Natural killer cell (primary cell): ENCODE measurements at regions of chr18 and their contacts with region 1.

Region 1: DNA sequence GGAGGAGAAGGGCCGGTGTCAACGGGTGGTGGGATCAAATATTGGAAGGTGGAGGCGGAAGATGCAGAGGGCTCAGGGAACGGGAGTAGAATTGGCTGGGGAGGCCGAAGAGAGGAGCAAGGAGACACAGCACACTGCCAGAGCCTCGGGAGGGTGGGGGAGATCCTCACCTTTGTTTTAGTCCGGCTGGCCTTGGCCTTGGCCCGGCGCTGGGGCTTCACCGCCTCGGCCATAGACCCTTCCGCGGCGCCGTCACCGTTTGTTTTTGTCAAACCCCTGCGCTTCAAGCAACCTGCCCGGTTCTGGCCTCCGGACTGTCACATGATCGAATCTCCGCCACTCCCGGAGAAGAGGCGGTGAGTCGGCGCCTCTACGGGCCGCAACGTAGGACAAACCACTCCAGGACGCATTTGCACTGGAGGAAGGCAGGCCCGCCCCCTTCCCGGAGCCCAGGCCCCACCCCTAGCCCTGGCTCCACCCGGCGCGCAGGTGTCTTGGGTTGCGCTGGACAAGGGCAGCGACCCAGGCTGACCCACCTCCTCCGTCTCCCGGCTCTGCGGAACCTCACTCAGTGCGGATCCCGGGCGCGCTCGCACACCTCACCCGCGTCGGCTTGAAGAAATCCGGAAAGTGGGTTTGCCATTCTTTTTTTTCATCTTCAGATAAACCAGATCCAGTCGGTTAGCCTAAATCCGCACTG is at the start of gene EPG5:
- DNase-seq: peak; percentile 89 to 94
- ATAC-seq: peak; percentile 82 to 95 (median 84)
- H3K4me3 ChIP-seq: peak within 1 kb of the TSS; percentile 79
- H3K4me3 Mint-ChIP-seq: peak within 1 kb of the TSS; percentile 99
- H3K27ac ChIP-seq: peak within 1 kb of the TSS; percentile 72
- H3K27ac Mint-ChIP-seq: peak within 1 kb of the TSS; percentile 93 to 97
- H3K4me1 ChIP-seq: peaks cover 16% of the 10 kb centered on the region
- H3K4me1 Mint-ChIP-seq: peaks cover 46% of the 10 kb centered on the region in 2 donors
- H3K27me3 ChIP-seq: no peaks in the 10 kb centered on the region
- H3K27me3 Mint-ChIP-seq: no peaks in the 10 kb centered on the region
- CTCF ChIP-seq: no peak
- total RNA-seq, gene EPG5: 81.3 to 133 (median 99.6) TPM

Region 2: DNA sequence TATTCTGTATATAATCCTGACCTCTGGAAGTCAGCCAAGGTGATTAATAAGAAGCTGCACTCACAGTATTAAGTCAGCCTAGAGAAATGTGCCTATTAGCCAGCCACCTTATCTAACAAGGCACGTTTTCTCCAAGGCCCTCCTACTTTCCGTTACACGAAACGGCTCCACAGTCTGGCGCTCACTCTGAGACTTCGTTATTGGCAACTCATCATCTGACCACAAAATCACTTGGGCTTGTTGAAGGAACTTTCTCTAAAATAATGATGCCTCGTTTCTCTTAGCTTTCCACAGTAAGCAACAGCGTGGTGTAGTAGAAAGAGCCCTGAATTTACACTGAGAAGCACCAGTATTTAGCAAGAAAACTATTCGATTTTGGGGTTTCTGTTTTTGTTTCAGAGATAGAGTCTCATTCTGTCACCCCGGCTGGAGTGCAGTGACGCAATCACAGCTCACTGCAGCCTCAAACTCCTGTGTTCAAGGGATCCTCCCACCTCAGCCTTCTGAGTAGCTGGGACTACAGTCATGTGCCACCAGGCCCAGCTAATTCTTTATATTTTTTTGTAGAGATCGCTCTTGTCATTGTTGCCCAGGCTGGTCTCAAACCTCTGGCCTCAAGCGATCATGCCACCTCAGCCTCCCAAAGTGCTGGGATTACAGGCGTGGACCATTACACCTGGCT is 296.7 kb before region 1 on chr18:
- intact Hi-C with region 1: loop called (anchors 2 kb)
- DNase-seq: peak; percentile 43 to 71
- ATAC-seq: peak; percentile 81 to 89 (median 86)
- H3K4me3 ChIP-seq: peak overlapping the region; percentile 22
- H3K4me3 Mint-ChIP-seq: peak overlapping the region; percentile 81
- H3K27ac ChIP-seq: peak overlapping the region; percentile 86
- H3K27ac Mint-ChIP-seq: peak overlapping the region; percentile 90 to 96
- H3K4me1 ChIP-seq: peaks cover 43% of the 10 kb centered on the region
- H3K4me1 Mint-ChIP-seq: peaks cover 44 to 57% of the 10 kb centered on the region in 2 donors
- H3K27me3 ChIP-seq: no peaks in the 10 kb centered on the region
- H3K27me3 Mint-ChIP-seq: no peaks in the 10 kb centered on the region
- CTCF ChIP-seq: no peak

Region 3: DNA sequence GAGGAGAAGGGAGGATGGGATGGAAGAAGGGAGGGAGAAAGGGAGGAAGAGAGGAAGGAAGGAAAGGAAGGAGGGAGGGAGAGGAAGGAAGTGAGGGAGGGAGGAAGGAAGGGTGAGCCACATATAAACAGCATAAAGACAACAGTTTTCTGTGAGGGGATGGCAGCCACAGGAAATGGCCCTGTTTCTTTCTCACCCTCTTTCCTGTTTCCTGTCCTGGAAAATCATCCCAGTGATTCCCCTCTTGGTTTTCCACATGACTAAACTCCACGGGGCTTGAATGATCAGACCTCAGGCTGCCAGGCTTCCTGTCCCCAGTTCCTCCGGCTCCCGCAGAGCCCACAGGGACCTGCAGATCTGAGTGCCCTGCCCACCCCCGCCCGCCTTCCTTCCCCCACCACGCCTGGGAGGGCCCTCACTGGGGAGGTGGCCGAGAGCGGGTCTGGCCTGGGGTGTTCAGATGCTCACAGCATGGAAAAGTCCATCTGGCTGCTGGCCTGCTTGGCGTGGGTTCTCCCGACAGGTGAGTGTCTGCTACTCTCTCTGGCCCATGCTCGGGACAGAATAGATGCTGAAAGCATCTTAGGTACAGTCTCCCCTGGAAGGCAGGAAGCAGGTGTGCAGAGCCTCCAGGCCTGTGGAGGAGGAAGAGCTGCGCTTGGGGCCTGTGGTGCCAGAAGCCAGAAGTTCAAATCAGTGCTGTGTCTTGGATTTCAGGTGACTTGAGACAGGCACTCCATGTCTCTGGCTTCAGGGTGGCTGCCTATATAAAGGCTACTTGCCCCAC is 141.7 kb before region 1 on chr18 and contains the start of gene SIGLEC15:
- intact Hi-C with region 1: no loop called
- DNase-seq: no peak
- ATAC-seq: peak in 1 of 3 donors; percentile 16
- H3K4me3 ChIP-seq: no peak within 1 kb of the TSS
- H3K4me3 Mint-ChIP-seq: no peak within 1 kb of the TSS
- H3K27ac ChIP-seq: no peak within 1 kb of the TSS
- H3K27ac Mint-ChIP-seq: peak within 1 kb of the TSS in 1 of 2 donors; percentile 54
- H3K4me1 ChIP-seq: peaks cover 31% of the 10 kb centered on the region
- H3K4me1 Mint-ChIP-seq: peaks cover 14 to 36% of the 10 kb centered on the region in 2 donors
- H3K27me3 ChIP-seq: peaks cover 2% of the 10 kb centered on the region
- H3K27me3 Mint-ChIP-seq: peaks cover 21 to 23% of the 10 kb centered on the region in 2 donors
- CTCF ChIP-seq: no peak
- total RNA-seq, gene SIGLEC15: not detected

Region 4: DNA sequence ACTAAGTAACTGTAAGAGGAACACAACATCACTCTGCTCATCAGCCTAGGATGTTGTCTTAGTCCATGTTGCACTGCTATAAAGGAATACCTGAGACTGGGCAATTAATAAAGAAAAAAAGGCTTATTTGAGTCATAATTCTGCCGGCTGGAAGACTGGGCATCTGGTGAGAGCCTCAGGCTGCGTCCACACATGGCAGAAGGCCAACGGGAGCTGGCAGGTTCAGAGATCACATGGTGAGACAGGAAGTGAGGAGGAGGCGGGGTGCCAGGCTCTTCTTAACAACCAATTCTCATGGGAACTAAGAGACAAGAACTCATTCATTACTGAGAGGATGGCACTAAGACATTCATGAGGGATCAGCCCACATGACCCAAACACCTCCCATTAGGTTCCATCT is 46.8 kb before region 1 on chr18:
- intact Hi-C with region 1: loop called (anchors 5 kb)
- DNase-seq: peak in 1 of 2 donors; percentile 20
- ATAC-seq: peak; percentile 62 to 70 (median 67)
- H3K4me3 ChIP-seq: no peak overlapping the region
- H3K4me3 Mint-ChIP-seq: no peak overlapping the region
- H3K27ac ChIP-seq: no peak overlapping the region
- H3K27ac Mint-ChIP-seq: peak overlapping the region; percentile 16 to 25
- H3K4me1 ChIP-seq: peaks cover 8% of the 10 kb centered on the region
- H3K4me1 Mint-ChIP-seq: peaks cover 22 to 24% of the 10 kb centered on the region in 2 donors
- H3K27me3 ChIP-seq: no peaks in the 10 kb centered on the region
- H3K27me3 Mint-ChIP-seq: no peaks in the 10 kb centered on the region
- CTCF ChIP-seq: no peak

Region 5: DNA sequence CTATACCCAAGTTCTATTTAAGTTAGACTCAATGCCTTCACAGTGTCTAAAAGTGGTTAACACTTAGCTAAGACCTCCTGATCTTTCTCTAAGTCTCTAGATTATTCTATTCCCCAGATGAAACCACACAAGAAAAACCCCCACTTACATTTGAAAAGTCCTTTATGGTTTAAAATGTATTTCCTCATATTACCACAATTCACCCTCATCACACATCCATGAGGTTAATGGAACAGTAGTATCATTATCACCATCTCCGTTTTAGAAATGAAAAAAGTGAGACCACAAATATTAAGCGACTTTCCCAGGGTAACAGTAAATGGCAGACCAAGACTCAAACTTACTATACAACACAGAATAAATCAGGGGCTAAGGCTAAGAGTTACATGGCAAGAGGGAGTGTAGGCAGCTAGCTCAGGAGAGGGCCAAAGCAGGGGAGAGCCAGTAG is 28.6 kb before region 1 on chr18:
- intact Hi-C with region 1: loop called (anchors 1 kb)
- DNase-seq: peak in 1 of 2 donors; percentile 72
- ATAC-seq: peak; percentile 79 to 92 (median 91)
- H3K4me3 ChIP-seq: no peak overlapping the region
- H3K4me3 Mint-ChIP-seq: peak overlapping the region; percentile 83
- H3K27ac ChIP-seq: peak overlapping the region; percentile 79
- H3K27ac Mint-ChIP-seq: peak overlapping the region; percentile 86 to 89
- H3K4me1 ChIP-seq: peaks cover 19% of the 10 kb centered on the region
- H3K4me1 Mint-ChIP-seq: peaks cover 47 to 51% of the 10 kb centered on the region in 2 donors
- H3K27me3 ChIP-seq: no peaks in the 10 kb centered on the region
- H3K27me3 Mint-ChIP-seq: no peaks in the 10 kb centered on the region
- CTCF ChIP-seq: no peak